T-cell (primary cell): ENCODE measurements at regions of chr16 and their contacts with region 1.

Region 1: DNA sequence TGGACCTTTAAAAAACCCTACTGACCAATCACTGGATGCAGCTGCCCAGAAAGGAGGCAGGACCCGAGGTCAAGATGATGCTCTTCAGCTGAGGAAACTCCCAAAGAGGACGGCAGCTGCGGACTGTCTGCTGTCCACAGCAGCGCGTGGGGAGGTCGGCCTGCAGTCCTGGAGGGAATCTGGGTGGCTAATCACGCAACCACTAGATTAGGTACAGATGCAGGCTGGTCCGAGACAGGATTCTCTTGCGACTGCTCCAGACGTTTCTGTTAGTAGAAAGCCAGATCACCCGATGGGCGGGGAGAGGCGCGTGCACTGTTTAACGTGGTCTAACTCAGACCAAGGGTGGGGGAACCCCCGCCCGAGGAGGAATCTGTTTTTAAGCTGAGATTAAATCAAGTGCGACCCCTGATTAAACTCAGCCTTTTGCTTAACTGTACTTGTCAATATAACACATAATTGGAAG is 8.8 kb downstream of the CTRB2 start:
- DNase-seq: no peak
- ATAC-seq: no peak
- H3K4me3 ChIP-seq: no peak overlapping the region
- H3K4me3 Mint-ChIP-seq: no peak overlapping the region
- H3K27ac ChIP-seq: no peak overlapping the region
- H3K27ac Mint-ChIP-seq: no peak overlapping the region
- H3K4me1 ChIP-seq: peaks cover 2 to 17% of the 10 kb centered on the region in 2 experiments
- H3K4me1 Mint-ChIP-seq: peaks cover 18 to 20% (median 18%) of the 10 kb centered on the region in 3 donors
- H3K27me3 ChIP-seq: peaks cover 0 to 32% of the 10 kb centered on the region in 2 experiments
- H3K27me3 Mint-ChIP-seq: peaks cover 10 to 18% of the 10 kb centered on the region in 2 donors

Region 2: GRCh38 chr16:75218256-75219070 is 20.3 kb after region 1 on chr16 and contains the start of gene CTRB1:
- CTCF ChIA-PET with region 1: no interaction called
- POLR2A ChIA-PET with region 1: interaction called, 3 to 10 read pairs
- DNase-seq: no peak
- ATAC-seq: no peak
- H3K4me3 ChIP-seq: peak within 1 kb of the TSS; percentile 20 to 51
- H3K4me3 Mint-ChIP-seq: peak within 1 kb of the TSS; percentile 73 to 82 (median 76)
- H3K27ac ChIP-seq: peak within 1 kb of the TSS; percentile 47
- H3K27ac Mint-ChIP-seq: peak within 1 kb of the TSS; percentile 83 to 95
- H3K4me1 ChIP-seq: peaks cover 0 to 10% of the 10 kb centered on the region in 2 experiments
- H3K4me1 Mint-ChIP-seq: peaks cover 8 to 17% (median 12%) of the 10 kb centered on the region in 3 donors
- H3K27me3 ChIP-seq: no peaks in the 10 kb centered on the region
- H3K27me3 Mint-ChIP-seq: no peaks in the 10 kb centered on the region
- total RNA-seq, gene CTRB1: 6.1 to 8.3 (median 7.9) TPM in 3 of 5 donors, not detected in the others

Region 3: DNA sequence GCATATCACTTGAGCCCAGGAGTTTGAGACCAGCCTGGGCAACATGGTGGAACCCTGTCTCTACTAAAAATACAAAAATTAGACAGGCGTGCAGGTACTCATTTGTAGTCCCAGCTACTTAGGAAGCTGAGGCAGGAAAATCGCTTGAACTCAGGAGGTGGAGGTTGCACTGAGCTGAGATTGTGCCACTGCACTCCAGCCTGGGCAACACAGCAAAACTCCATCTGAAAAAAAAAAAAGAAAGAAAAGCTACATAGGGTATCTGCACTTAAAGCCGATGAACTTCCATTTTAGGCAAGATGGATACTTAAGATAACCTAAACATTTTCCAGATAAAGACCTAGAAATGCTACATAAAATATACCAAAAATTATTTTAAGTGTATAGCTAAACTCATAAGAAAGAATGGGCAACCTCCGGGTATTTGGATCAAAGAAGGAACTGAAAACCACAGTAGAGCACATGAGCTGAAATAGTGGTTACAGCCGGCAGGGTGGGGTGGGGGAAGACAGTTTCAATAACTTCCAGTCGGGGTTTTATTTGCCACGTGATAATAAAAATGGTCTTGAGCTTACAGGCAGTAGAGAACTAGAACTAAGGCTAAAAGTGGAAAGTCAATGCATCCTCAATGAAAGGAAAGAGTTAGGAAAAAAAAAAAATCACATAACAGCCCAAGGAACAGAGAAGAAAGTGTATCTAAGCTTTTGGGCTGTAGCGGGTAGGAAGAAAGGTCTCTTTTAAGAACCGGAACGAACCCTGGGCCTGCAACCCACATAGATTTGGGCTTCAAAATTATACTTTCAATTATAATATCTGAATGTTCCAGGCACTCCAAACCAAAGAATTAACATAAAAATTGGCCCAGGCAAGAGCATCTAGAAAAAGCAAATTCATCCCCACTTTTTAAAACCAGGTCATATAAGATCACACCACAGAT is 182.0 kb after region 1 on chr16:
- CTCF ChIA-PET with region 1: interaction called, 12 to 61 read pairs
- POLR2A ChIA-PET with region 1: no interaction called
- DNase-seq: peak; percentile 5 to 68 (median 40)
- ATAC-seq: peak; percentile 90 to 97 (median 94)
- H3K4me3 ChIP-seq: no peak overlapping the region
- H3K4me3 Mint-ChIP-seq: peak overlapping the region; percentile 59 to 78 (median 62)
- H3K27ac ChIP-seq: peak overlapping the region; percentile 38
- H3K27ac Mint-ChIP-seq: peak overlapping the region; percentile 66 to 83
- H3K4me1 ChIP-seq: peaks cover 18 to 29% of the 10 kb centered on the region in 2 experiments
- H3K4me1 Mint-ChIP-seq: peaks cover 46 to 54% (median 52%) of the 10 kb centered on the region in 3 donors
- H3K27me3 ChIP-seq: no peaks in the 10 kb centered on the region
- H3K27me3 Mint-ChIP-seq: no peaks in the 10 kb centered on the region

Region 4: DNA sequence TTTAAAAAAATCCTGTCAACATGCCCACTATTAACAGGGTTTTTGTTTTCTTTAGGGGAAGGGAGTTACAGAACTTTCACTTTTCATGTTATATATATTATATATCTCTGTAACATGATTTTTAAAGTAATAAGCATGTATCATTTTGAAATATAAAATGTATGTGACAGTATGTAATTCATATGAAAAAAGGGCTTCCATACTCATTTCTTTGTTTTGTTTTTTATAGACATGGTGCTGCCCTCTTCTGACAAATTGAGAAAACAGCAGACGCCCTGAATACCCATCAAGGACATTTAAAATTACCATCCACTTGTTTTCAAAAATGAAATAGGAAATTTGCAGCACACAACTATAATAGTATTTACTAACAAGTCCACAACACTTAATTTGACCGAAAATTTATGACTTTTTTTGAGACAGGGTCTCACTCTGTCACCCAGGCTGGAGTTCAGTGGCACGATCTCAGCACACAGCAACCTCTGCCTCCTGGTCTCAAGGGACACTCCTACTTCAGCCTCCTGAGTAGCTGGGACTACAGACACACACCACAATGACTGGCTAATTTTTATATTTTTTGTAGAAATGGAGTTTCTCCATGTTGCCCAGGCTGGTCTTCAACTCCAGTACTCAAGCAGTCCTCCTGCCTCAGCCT is 204.8 kb after region 1 on chr16:
- CTCF ChIA-PET with region 1: interaction called, 11 to 14 read pairs
- POLR2A ChIA-PET with region 1: no interaction called
- DNase-seq: peak in 3 of 35 experiments; percentile 6 to 55 (median 7)
- ATAC-seq: no peak
- H3K4me3 ChIP-seq: no peak overlapping the region
- H3K4me3 Mint-ChIP-seq: no peak overlapping the region
- H3K27ac ChIP-seq: no peak overlapping the region
- H3K27ac Mint-ChIP-seq: no peak overlapping the region
- H3K4me1 ChIP-seq: no peaks in the 10 kb centered on the region
- H3K4me1 Mint-ChIP-seq: peaks cover 0 to 4% (median 3%) of the 10 kb centered on the region in 3 donors
- H3K27me3 ChIP-seq: no peaks in the 10 kb centered on the region
- H3K27me3 Mint-ChIP-seq: no peaks in the 10 kb centered on the region

Region 5: GRCh38 chr16:75764154-75764768 is 566.1 kb after region 1 on chr16:
- CTCF ChIA-PET with region 1: interaction called, 5 to 23 read pairs
- POLR2A ChIA-PET with region 1: no interaction called
- DNase-seq: peak; percentile 12 to 84 (median 46)
- ATAC-seq: peak; percentile 85 to 99 (median 94)
- H3K4me3 ChIP-seq: no peak overlapping the region
- H3K4me3 Mint-ChIP-seq: no peak overlapping the region
- H3K27ac ChIP-seq: no peak overlapping the region
- H3K27ac Mint-ChIP-seq: peak overlapping the region in 1 of 2 donors; percentile 39
- H3K4me1 ChIP-seq: peaks cover 0 to 2% of the 10 kb centered on the region in 2 experiments
- H3K4me1 Mint-ChIP-seq: peaks cover 0 to 9% (median 0%) of the 10 kb centered on the region in 3 donors
- H3K27me3 ChIP-seq: no peaks in the 10 kb centered on the region
- H3K27me3 Mint-ChIP-seq: peaks cover 8 to 19% of the 10 kb centered on the region in 2 donors